ENCODE measurements at regions of chr10 and their contacts with region 1.

Region 1: GRCh38 chr10:33193057-33193700 is 141.3 kb downstream of the NRP1 start:
- DNase-seq: peak; percentile 28 to 70 (median 62)
- ATAC-seq: peak; percentile 91
- H3K4me3 ChIP-seq: no peak overlapping the region
- H3K4me3 Mint-ChIP-seq: no peak overlapping the region
- H3K27ac ChIP-seq: no peak overlapping the region
- H3K27ac Mint-ChIP-seq: peak overlapping the region in 1 of 9 donors; percentile 37
- H3K4me1 ChIP-seq: no peaks in the 10 kb centered on the region
- H3K4me1 Mint-ChIP-seq: peaks cover 0 to 6% (median 0%) of the 10 kb centered on the region in 7 donors
- H3K27me3 ChIP-seq: no peaks in the 10 kb centered on the region
- H3K27me3 Mint-ChIP-seq: peaks cover 0 to 28% (median 5%) of the 10 kb centered on the region in 5 donors

Region 2: DNA sequence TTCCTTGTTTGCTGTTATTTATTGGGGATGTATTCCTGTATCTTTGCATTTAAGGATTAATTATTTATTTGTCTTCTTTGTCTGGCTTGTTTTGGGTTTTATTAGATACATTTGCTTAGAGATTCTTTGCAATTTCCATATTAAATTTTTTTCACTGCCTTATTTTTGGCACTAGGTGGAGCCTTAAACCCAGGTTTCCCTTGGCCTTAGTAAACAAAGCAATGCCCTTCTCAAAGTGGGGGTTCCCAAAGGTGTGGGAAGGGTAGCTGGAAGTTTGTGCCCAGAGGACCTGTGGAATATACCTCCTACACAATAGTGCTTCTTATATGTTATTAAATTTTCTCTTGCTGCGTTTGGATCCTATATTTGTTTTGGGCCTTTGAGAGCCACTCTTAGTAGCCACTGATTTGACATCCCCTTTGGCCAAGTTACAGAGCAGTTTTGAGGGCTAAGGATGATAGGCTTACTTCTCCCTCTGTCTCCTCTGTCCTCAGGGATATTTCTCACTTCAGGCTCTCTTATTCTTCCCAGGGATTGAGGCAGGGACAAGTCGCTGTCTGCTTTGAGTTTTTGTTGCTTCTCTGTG is 397.5 kb before region 1 on chr10:
- CTCF ChIA-PET with region 1: no interaction called
- POLR2A ChIA-PET with region 1: no interaction called
- intact Hi-C with region 1: loop called in 1 of 2 experiments (anchors 1 kb)
- DNase-seq: peak in 5 of 9 donors; percentile 12 to 37 (median 22)
- ATAC-seq: peak; percentile 54
- H3K4me3 ChIP-seq: no peak overlapping the region
- H3K4me3 Mint-ChIP-seq: no peak overlapping the region
- H3K27ac ChIP-seq: no peak overlapping the region
- H3K27ac Mint-ChIP-seq: no peak overlapping the region
- H3K4me1 ChIP-seq: peaks cover 0 to 4% of the 10 kb centered on the region in 2 donors
- H3K4me1 Mint-ChIP-seq: no peaks in the 10 kb centered on the region
- H3K27me3 ChIP-seq: no peaks in the 10 kb centered on the region
- H3K27me3 Mint-ChIP-seq: peaks cover 0 to 3% (median 0%) of the 10 kb centered on the region in 5 donors

Region 3: DNA sequence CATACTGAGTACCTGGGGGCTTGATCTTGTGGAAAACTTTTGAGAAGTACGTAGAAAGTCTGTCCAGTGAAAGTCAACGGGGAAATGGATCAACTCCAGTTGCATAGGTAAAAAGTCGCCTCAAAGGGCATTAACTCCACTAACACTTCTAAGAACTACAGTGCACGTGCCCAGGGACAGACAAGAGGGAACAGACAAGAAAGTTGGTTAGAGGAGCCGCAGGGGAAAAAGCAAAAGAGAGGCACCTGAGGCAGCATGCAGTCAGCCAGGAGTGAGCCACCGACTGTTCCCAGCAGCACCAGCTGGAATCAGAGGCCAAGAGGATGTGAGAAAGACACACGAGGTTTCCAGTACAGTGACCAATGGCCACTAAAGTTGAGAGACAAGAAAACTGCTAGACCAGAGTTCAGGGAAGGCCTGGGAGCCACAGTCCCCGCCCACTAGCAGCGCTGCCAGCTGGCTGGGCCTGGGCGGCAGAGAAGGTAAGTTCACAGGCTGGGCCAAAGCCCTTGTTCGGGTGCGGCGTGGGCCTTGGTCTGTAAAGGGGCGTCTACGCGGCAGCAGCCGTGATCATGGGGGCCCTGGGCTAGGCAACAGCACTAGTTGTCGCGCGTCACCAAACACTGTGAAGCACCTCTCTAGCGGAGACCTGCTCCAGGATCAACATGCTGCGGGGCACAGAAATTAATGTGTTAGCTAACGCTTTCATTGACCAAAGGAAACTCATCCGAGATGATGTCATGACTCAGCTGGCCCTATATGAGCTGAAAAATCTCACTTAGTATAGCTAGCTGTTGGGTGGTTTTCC is 249.1 kb before region 1 on chr10:
- CTCF ChIA-PET with region 1: no interaction called
- POLR2A ChIA-PET with region 1: no interaction called
- intact Hi-C with region 1: no loop called
- DNase-seq: no peak
- ATAC-seq: peak; percentile 14
- H3K4me3 ChIP-seq: no peak overlapping the region
- H3K4me3 Mint-ChIP-seq: no peak overlapping the region
- H3K27ac ChIP-seq: no peak overlapping the region
- H3K27ac Mint-ChIP-seq: no peak overlapping the region
- H3K4me1 ChIP-seq: peaks cover 5 to 38% of the 10 kb centered on the region in 2 donors
- H3K4me1 Mint-ChIP-seq: peaks cover 12 to 60% (median 49%) of the 10 kb centered on the region in 7 donors
- H3K27me3 ChIP-seq: no peaks in the 10 kb centered on the region
- H3K27me3 Mint-ChIP-seq: no peaks in the 10 kb centered on the region

Region 4: DNA sequence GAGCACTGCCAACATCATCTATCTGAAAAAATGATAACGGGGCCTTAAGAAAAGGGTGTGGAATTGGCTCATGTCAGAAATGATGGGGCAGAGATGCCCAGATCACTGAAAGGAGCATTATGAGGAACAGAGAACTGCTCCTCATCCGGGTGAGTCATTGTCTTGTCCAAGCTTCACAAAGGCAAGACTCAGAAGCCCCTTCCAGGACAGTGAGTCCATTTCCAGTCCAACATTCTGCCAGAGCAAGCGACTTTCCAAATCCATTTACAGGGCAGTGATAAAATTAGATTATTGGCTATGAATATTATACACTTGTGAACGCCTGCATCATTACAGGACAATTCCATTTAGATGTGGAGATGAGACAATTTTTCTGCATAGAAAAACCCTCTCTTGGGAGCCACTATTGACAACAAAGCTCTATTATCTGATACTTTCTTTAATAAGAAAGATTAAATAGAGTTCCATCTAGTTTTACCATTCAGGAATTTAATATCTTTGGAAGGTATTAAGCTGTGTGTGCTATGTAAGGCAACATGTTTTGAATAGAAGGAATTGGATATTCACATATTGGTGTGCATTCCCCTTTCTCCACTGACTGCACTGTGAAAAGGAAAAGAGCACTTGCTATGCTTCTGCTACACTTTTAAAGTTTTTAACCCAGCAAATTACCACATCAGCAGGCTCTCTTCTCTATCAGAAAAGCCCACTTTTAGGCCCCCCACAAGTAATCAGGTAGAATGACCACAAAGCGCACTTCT is 18.3 kb before region 1 on chr10:
- CTCF ChIA-PET with region 1: no interaction called
- POLR2A ChIA-PET with region 1: no interaction called
- intact Hi-C with region 1: no loop called
- DNase-seq: no peak
- ATAC-seq: no peak
- H3K4me3 ChIP-seq: no peak overlapping the region
- H3K4me3 Mint-ChIP-seq: no peak overlapping the region
- H3K27ac ChIP-seq: no peak overlapping the region
- H3K27ac Mint-ChIP-seq: no peak overlapping the region
- H3K4me1 ChIP-seq: no peaks in the 10 kb centered on the region
- H3K4me1 Mint-ChIP-seq: no peaks in the 10 kb centered on the region
- H3K27me3 ChIP-seq: no peaks in the 10 kb centered on the region
- H3K27me3 Mint-ChIP-seq: peaks cover under 1 to 49% (median 8%) of the 10 kb centered on the region in 5 donors

Region 5: GRCh38 chr10:33248638-33249037 is 55.5 kb after region 1 on chr10:
- CTCF ChIA-PET with region 1: interaction called, 9 read pairs
- POLR2A ChIA-PET with region 1: no interaction called
- intact Hi-C with region 1: loop called (anchors 1 kb)
- DNase-seq: peak in 8 of 9 donors; percentile 38 to 86 (median 76)
- ATAC-seq: peak; percentile 97
- H3K4me3 ChIP-seq: peak overlapping the region; percentile 21
- H3K4me3 Mint-ChIP-seq: peak overlapping the region; percentile 60 to 89 (median 78)
- H3K27ac ChIP-seq: no peak overlapping the region
- H3K27ac Mint-ChIP-seq: peak overlapping the region; percentile 70 to 94 (median 87)
- H3K4me1 ChIP-seq: peaks cover 21 to 29% of the 10 kb centered on the region in 2 donors
- H3K4me1 Mint-ChIP-seq: peaks cover 28 to 80% (median 64%) of the 10 kb centered on the region in 7 donors
- H3K27me3 ChIP-seq: no peaks in the 10 kb centered on the region
- H3K27me3 Mint-ChIP-seq: peaks cover 0 to 43% (median 0%) of the 10 kb centered on the region in 5 donors

Region 6: GRCh38 chr10:33330543-33331378 is 137.6 kb after region 1 on chr10:
- CTCF ChIA-PET with region 1: interaction called, 5 read pairs
- POLR2A ChIA-PET with region 1: interaction called, 3 read pairs
- intact Hi-C with region 1: loop called (anchors 1 kb)
- DNase-seq: peak; percentile 42 to 74 (median 57)
- ATAC-seq: peak; percentile 83
- H3K4me3 ChIP-seq: no peak overlapping the region
- H3K4me3 Mint-ChIP-seq: peak overlapping the region in 4 of 10 donors; percentile 2 to 39 (median 30)
- H3K27ac ChIP-seq: no peak overlapping the region
- H3K27ac Mint-ChIP-seq: no peak overlapping the region
- H3K4me1 ChIP-seq: peaks cover 5 to 12% of the 10 kb centered on the region in 2 donors
- H3K4me1 Mint-ChIP-seq: peaks cover 5 to 29% (median 18%) of the 10 kb centered on the region in 7 donors
- H3K27me3 ChIP-seq: peaks cover 15 to 19% of the 10 kb centered on the region in 2 donors
- H3K27me3 Mint-ChIP-seq: peaks cover 57 to 73% (median 71%) of the 10 kb centered on the region in 5 donors

Region 7: DNA sequence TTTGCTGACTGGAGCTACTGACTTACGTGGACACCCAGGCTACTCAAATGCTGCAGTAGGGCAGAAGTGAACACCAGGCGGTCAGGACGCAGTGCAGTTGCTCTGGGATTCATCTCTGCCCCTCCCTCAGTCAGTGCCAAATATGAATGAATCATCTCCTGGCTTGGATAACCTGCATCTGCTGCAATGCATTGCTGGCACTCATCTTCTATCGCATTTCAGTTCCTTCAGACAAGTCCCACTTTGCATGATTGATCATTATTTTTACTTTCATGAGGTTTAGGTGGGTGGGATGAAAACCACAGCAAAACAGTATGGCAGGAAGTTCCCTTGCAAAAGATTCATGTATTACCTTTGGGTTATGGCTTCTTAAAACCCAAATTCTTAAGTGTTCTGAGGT is 365.9 kb after region 1 on chr10:
- CTCF ChIA-PET with region 1: no interaction called
- POLR2A ChIA-PET with region 1: no interaction called
- intact Hi-C with region 1: loop called in 1 of 2 experiments (anchors 5 kb)
- DNase-seq: no peak
- ATAC-seq: no peak
- H3K4me3 ChIP-seq: no peak overlapping the region
- H3K4me3 Mint-ChIP-seq: no peak overlapping the region
- H3K27ac ChIP-seq: no peak overlapping the region
- H3K27ac Mint-ChIP-seq: no peak overlapping the region
- H3K4me1 ChIP-seq: no peaks in the 10 kb centered on the region
- H3K4me1 Mint-ChIP-seq: peaks cover 0 to 11% (median 5%) of the 10 kb centered on the region in 7 donors
- H3K27me3 ChIP-seq: no peaks in the 10 kb centered on the region
- H3K27me3 Mint-ChIP-seq: peaks cover 2 to 47% (median 38%) of the 10 kb centered on the region in 5 donors

Region 8: GRCh38 chr10:34121781-34122628 is 928.8 kb after region 1 on chr10:
- CTCF ChIA-PET with region 1: no interaction called
- POLR2A ChIA-PET with region 1: no interaction called
- intact Hi-C with region 1: loop called in 1 of 2 experiments (anchors 10 kb)
- DNase-seq: peak in 5 of 9 donors; percentile 1 to 20 (median 4)
- ATAC-seq: no peak
- H3K4me3 ChIP-seq: no peak overlapping the region
- H3K4me3 Mint-ChIP-seq: peak overlapping the region in 9 of 10 donors; percentile 17 to 67 (median 57)
- H3K27ac ChIP-seq: no peak overlapping the region
- H3K27ac Mint-ChIP-seq: peak overlapping the region; percentile 0 to 72 (median 48)
- H3K4me1 ChIP-seq: peaks cover 0 to 9% of the 10 kb centered on the region in 2 donors
- H3K4me1 Mint-ChIP-seq: peaks cover 9 to 32% (median 20%) of the 10 kb centered on the region in 7 donors
- H3K27me3 ChIP-seq: no peaks in the 10 kb centered on the region
- H3K27me3 Mint-ChIP-seq: no peaks in the 10 kb centered on the region

Measured in naive thymus-derived CD4-positive, alpha-beta T cell (primary cell).